Posterior vena cava (tissue), 2 donors: ENCODE measurements at regions of chr5 and their contacts with region 1.

Region 1: GRCh38 chr5:123628860-123629556 is 117.0 kb downstream of the CSNK1G3 start:
- DNase-seq: no peak

Region 2: DNA sequence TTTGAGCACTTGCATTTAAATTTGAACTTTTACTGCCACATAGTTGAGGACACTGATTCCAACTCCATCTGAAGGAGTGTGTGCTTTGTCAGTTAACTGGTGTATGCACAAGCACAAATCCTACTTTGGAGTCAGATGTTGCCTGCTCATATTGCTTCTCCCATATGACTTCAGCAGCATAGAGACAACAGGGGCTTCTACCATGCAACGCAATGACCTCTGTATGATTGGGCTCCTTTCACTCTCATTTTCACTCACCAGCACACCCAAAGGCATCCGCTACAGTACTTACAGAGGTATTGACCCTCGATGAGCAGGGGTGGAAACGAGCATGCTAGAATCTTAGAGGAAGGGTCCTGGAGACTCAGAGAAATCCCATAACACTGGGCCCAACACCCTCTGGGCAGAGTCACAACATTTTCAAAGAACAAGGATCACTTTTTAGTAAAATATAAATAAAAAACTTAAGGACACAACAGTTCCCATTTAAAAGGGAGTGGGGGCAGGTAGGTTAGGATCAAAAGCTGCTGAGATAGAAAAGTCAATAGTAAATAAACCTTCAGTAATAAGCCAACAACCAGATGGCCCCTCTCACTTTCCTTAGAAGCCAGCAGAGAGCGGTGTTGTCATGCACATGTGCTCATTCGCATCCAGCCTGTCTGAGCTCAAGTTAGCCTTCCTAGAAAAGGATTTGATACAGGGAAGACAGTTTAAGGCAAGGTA is 1113.1 kb before region 1 on chr5:
- intact Hi-C with region 1: loop called in 1 of 2 experiments (anchors 10 kb)
- DNase-seq: no peak